Activated B cell treated with CpG ODN at 0.5 μM for 24 hours (primary cell): ENCODE measurements at regions of chr10 and their contacts with region 1.

Region 1: GRCh38 chr10:72215652-72216549 is at the starts of genes ANAPC16 and ASCC1:
- DNase-seq: peak; percentile 98
- ATAC-seq: peak; percentile 83
- H3K4me3 Mint-ChIP-seq: peak within 1 kb of the TSS; percentile 96
- H3K27ac Mint-ChIP-seq: peak within 1 kb of the TSS; percentile 99
- H3K4me1 Mint-ChIP-seq: peaks cover 62% of the 10 kb centered on the region
- H3K27me3 Mint-ChIP-seq: no peaks in the 10 kb centered on the region
- CTCF ChIP-seq: no peak
- total RNA-seq, gene ANAPC16: 128 and 137 TPM in 2 replicates
- total RNA-seq, gene ASCC1: 42.6 and 42.9 TPM in 2 replicates

Region 2: GRCh38 chr10:71766702-71767419 is 449.0 kb before region 1 on chr10:
- CTCF ChIA-PET with region 1: no interaction called
- POLR2A ChIA-PET with region 1: interaction called, 3 read pairs
- intact Hi-C with region 1: loop called (anchors 5 kb)
- DNase-seq: no peak
- ATAC-seq: peak; percentile 16
- H3K4me3 Mint-ChIP-seq: peak overlapping the region; percentile 55
- H3K27ac Mint-ChIP-seq: peak overlapping the region; percentile 91
- H3K4me1 Mint-ChIP-seq: peaks cover 79% of the 10 kb centered on the region
- H3K27me3 Mint-ChIP-seq: no peaks in the 10 kb centered on the region
- CTCF ChIP-seq: no peak

Region 3: GRCh38 chr10:72088889-72089575 is 126.9 kb before region 1 on chr10:
- CTCF ChIA-PET with region 1: no interaction called
- POLR2A ChIA-PET with region 1: interaction called, 16 read pairs
- intact Hi-C with region 1: loop called (anchors 1 kb)
- DNase-seq: peak; percentile 29
- ATAC-seq: peak; percentile 27
- H3K4me3 Mint-ChIP-seq: peak overlapping the region; percentile 99
- H3K27ac Mint-ChIP-seq: peak overlapping the region; percentile 97
- H3K4me1 Mint-ChIP-seq: peaks cover 39% of the 10 kb centered on the region
- H3K27me3 Mint-ChIP-seq: no peaks in the 10 kb centered on the region
- CTCF ChIP-seq: no peak

Region 4: DNA sequence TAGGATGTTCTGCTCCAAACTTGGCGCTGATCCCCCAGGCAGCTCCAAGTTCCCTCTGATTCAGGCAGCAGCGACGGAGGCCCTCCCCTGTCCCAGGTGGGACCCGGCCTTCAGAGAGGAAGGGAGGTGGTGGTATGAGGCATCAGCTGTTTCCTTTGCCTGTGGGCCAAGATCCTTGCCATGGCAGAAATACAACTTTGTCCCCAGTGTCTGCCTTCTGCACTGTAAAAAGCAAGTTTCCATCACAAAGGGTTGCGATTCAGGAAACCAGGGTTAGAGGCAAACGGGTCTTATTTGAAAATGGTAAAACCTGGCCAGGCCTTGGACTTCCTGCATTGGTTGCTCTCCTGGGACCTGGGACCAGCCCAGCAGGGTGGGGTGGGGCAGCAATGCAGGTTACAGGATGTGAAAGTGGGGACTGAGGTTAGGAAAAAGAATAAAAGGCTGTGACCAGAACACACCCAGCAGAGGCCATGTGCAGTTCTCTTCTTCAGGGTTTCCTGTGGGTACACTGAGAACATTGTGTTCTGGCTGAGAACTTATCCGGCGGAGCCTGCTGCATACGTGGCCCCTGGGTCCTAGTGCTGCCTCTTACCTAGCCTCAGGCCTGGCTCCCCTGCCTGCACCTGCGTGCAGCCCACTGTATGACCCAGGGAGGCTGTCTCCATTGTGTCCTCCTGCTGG is 32.7 kb after region 1 on chr10:
- CTCF ChIA-PET with region 1: interaction called, 3 read pairs
- POLR2A ChIA-PET with region 1: interaction called, 70 read pairs
- intact Hi-C with region 1: loop called (anchors 1 kb)
- DNase-seq: peak; percentile 54
- ATAC-seq: peak; percentile 78
- H3K4me3 Mint-ChIP-seq: peak overlapping the region; percentile 74
- H3K27ac Mint-ChIP-seq: peak overlapping the region; percentile 97
- H3K4me1 Mint-ChIP-seq: peaks cover 85% of the 10 kb centered on the region
- H3K27me3 Mint-ChIP-seq: no peaks in the 10 kb centered on the region
- CTCF ChIP-seq: no peak

Region 5: GRCh38 chr10:72285972-72286521 is 70.1 kb after region 1 on chr10:
- CTCF ChIA-PET with region 1: no interaction called
- POLR2A ChIA-PET with region 1: interaction called, 217 read pairs
- intact Hi-C with region 1: no loop called
- DNase-seq: no peak
- ATAC-seq: peak; percentile 11
- H3K4me3 Mint-ChIP-seq: peak overlapping the region; percentile 33
- H3K27ac Mint-ChIP-seq: peak overlapping the region; percentile 73
- H3K4me1 Mint-ChIP-seq: peaks cover 40% of the 10 kb centered on the region
- H3K27me3 Mint-ChIP-seq: no peaks in the 10 kb centered on the region
- CTCF ChIP-seq: no peak

Region 6: GRCh38 chr10:72337020-72337629 is 121.2 kb after region 1 on chr10:
- CTCF ChIA-PET with region 1: interaction called, 15 read pairs
- POLR2A ChIA-PET with region 1: interaction called, 210 read pairs
- intact Hi-C with region 1: loop called (anchors 1 kb)
- DNase-seq: peak; percentile 72
- ATAC-seq: peak; percentile 13
- H3K4me3 Mint-ChIP-seq: no peak overlapping the region
- H3K27ac Mint-ChIP-seq: no peak overlapping the region
- H3K4me1 Mint-ChIP-seq: peaks cover 62% of the 10 kb centered on the region
- H3K27me3 Mint-ChIP-seq: no peaks in the 10 kb centered on the region
- CTCF ChIP-seq: peak; percentile 79

Region 7: GRCh38 chr10:72563327-72563932 is 347.5 kb after region 1 on chr10:
- CTCF ChIA-PET with region 1: no interaction called
- POLR2A ChIA-PET with region 1: no interaction called
- intact Hi-C with region 1: no loop called
- DNase-seq: no peak
- ATAC-seq: peak; percentile 74
- H3K4me3 Mint-ChIP-seq: peak overlapping the region; percentile 50
- H3K27ac Mint-ChIP-seq: peak overlapping the region; percentile 80
- H3K4me1 Mint-ChIP-seq: peaks cover 34% of the 10 kb centered on the region
- H3K27me3 Mint-ChIP-seq: no peaks in the 10 kb centered on the region
- CTCF ChIP-seq: no peak